K562 (cell line): ENCODE measurements at regions of chr7 and their contacts with region 1.

Region 1: DNA sequence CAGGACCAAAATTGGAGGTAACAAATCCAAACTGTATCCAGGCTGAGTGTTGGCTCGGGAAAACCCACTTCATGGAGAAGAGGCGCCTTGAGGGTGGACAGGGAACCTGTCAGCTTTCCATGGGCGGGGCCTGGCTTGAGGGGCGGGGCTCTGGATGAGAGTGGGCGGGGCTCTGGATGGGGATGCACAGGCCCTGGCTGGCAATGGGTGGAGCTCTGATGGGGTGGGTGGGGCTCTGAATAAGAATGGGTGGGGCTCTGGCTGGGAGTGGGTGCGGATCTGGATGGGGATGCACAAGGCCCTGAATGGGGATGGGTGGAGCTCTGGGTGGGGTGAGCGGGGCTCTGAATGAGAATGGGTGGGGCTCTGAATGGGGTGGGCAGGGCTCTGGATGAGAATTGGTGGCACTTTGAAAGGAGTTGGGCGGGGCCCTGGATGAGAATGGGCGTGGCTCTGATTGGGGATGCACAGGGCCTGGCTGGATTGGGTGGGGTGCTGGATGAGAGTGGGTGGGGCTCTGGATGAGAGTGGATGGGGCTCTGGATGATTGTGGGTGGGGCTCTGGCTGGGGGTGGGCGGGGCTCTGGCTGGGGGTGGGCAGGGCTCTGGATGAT is 96.6 kb upstream of the NPTX2 start:
- DNase-seq: peak; percentile 38 to 88 (median 84)
- ATAC-seq: peak; percentile 96
- H3K4me3 ChIP-seq: no peak overlapping the region
- H3K27ac ChIP-seq: no peak overlapping the region
- H3K4me1 ChIP-seq: no peaks in the 10 kb centered on the region
- H3K27me3 ChIP-seq: no peaks in the 10 kb centered on the region; a peak in 1 of 5 replicates
- CTCF ChIP-seq: no peak
- EP300 ChIP-seq: no peak
- POLR2A ChIP-seq: no peak
- RAD21 ChIP-seq: no peak

Region 2: DNA sequence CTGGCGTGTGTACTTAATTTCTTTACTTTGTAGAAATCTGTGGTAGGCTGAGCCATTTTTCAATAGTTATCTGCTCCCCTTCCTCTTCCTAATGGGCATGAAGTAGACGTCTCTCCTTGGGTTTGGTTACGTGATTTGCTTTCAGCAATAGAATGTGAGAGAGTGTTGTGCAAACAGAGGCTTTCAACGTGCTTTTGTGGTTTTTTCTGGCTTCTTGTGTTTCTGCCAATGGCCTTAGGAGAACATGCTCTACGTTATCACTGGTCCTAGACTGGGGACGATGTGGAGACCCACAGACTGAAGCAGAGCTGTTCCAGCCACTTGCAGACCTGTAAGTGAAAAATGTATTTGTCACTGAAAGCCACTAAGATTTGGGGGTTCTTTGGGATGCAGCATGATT is 10.6 kb before region 1 on chr7:
- CTCF ChIA-PET with region 1: no interaction called
- POLR2A ChIA-PET with region 1: interaction called, 3 read pairs
- in situ Hi-C with region 1: no loop called
- intact Hi-C with region 1: loop called (anchors 1 kb)
- DNase-seq: no peak
- ATAC-seq: no peak
- H3K4me3 ChIP-seq: no peak overlapping the region
- H3K27ac ChIP-seq: no peak overlapping the region
- H3K4me1 ChIP-seq: peaks cover 0 to 2% of the 10 kb centered on the region in 2 experiments; a peak in 1 of 5 replicates
- H3K27me3 ChIP-seq: peaks cover 0 to 8% of the 10 kb centered on the region in 2 experiments; a peak in 1 of 5 replicates
- CTCF ChIP-seq: no peak
- EP300 ChIP-seq: no peak
- POLR2A ChIP-seq: no peak
- RAD21 ChIP-seq: no peak